A549 (cell line): ENCODE measurements at regions of chr7 and their contacts with region 1.

Region 1: GRCh38 chr7:6272481-6273323 is at the start of gene CYTH3:
- DNase-seq: peak; percentile 76 to 86
- ATAC-seq: peak; percentile 76 to 83
- H3K4me3 ChIP-seq: peak within 1 kb of the TSS; percentile 90
- H3K27ac ChIP-seq: peak within 1 kb of the TSS; percentile 82 to 97
- H3K4me1 ChIP-seq: peaks cover 38% of the 10 kb centered on the region
- CTCF ChIP-seq: no peak
- EP300 ChIP-seq: no peak
- POLR2A ChIP-seq: peak; percentile 89
- RAD21 ChIP-seq: no peak; a peak in 1 of 5 replicates
- polyA plus RNA-seq, gene CYTH3: 15.5 and 18.6 TPM in 2 replicates

Region 2: GRCh38 chr7:6256677-6257535 is 15.8 kb before region 1 on chr7:
- CTCF ChIA-PET with region 1: interaction called, 16 read pairs
- POLR2A ChIA-PET with region 1: no interaction called
- DNase-seq: no peak
- ATAC-seq: peak in 1 of 2 experiments; percentile 40; a peak in 3 of 6 replicates
- H3K4me3 ChIP-seq: no peak overlapping the region
- H3K27ac ChIP-seq: 0 out of 6 replicates have a peak overlapping the region, but pooled peaks of 1 of the 2 experiments have one; percentile 11
- H3K4me1 ChIP-seq: peaks cover 61% of the 10 kb centered on the region
- CTCF ChIP-seq: no peak
- EP300 ChIP-seq: no peak
- POLR2A ChIP-seq: no peak
- RAD21 ChIP-seq: no peak

Region 3: GRCh38 chr7:6589829-6590644 is 317.3 kb after region 1 on chr7 and contains the start of gene INTS15:
- CTCF ChIA-PET with region 1: no interaction called
- POLR2A ChIA-PET with region 1: no interaction called
- DNase-seq: peak; percentile 65 to 82
- ATAC-seq: peak; percentile 90 to 92
- H3K4me3 ChIP-seq: peak within 1 kb of the TSS; percentile 77
- H3K27ac ChIP-seq: peak within 1 kb of the TSS; percentile 89 to 92
- H3K4me1 ChIP-seq: peaks cover 11% of the 10 kb centered on the region
- CTCF ChIP-seq: peak; percentile 93
- EP300 ChIP-seq: no peak
- POLR2A ChIP-seq: peak; percentile 75
- RAD21 ChIP-seq: no peak; a peak in 2 of 5 replicates
- polyA plus RNA-seq, gene INTS15: 23.4 and 26.1 TPM in 2 replicates